ENCODE measurements at regions of chr1 and their contacts with region 1.

Region 1: DNA sequence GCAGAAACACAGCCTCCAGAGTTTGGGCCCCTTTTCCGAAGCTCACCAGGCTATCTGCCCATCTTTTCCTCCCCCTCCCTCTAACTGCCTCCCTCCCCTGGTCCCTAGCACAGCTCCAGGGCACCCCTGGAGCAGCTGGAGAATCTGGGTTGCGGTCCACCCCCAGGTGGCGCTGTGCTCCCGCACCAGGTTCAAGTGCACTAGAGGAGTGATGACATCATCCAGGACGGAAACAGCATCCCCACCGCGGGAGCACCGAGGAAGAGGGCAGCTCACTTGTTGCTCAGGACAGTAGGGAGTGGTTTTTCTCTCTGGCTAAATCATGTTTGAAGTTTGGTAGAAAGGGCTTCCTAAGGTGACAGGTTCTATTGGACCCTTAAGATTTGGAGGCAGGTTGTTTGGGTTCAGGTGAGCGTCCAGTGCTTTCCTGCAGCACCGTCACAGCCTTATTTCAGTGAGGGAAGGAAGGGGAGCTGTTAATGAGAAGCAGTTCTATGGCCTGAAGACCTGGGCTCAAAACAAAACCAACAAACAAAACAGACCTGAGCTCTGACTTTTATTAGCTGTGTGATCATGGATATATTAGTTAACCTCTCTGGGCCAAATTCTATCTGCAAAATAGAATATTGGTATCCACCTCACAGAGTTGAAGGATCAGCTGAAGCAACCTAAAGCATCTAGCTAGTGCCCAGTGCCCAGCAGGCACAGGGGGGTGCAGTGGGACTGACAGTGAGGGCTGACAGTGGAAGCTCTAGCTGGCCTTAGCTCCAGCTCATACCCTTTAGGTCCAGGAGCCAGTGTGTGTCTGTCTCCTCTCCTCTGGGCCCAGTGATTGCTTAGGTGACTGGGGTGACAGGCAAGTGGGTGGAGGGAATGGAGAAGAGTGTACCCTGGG is 7.5 kb downstream of the SHISA4 start:
- DNase-seq: peak; percentile 90
- H3K4me3 Mint-ChIP-seq: no peak overlapping the region
- H3K27ac Mint-ChIP-seq: peak overlapping the region; percentile 63
- H3K4me1 Mint-ChIP-seq: peaks cover 19% of the 10 kb centered on the region
- H3K27me3 Mint-ChIP-seq: peaks cover 15% of the 10 kb centered on the region

Region 2: GRCh38 chr1:201877877-201878401 is 18.2 kb before region 1 on chr1:
- CTCF ChIA-PET with region 1: interaction called, 12 read pairs
- POLR2A ChIA-PET with region 1: interaction called, 15 read pairs
- DNase-seq: no peak
- H3K4me3 Mint-ChIP-seq: no peak overlapping the region
- H3K27ac Mint-ChIP-seq: no peak overlapping the region
- H3K4me1 Mint-ChIP-seq: peaks cover 2% of the 10 kb centered on the region
- H3K27me3 Mint-ChIP-seq: no peaks in the 10 kb centered on the region

Region 3: DNA sequence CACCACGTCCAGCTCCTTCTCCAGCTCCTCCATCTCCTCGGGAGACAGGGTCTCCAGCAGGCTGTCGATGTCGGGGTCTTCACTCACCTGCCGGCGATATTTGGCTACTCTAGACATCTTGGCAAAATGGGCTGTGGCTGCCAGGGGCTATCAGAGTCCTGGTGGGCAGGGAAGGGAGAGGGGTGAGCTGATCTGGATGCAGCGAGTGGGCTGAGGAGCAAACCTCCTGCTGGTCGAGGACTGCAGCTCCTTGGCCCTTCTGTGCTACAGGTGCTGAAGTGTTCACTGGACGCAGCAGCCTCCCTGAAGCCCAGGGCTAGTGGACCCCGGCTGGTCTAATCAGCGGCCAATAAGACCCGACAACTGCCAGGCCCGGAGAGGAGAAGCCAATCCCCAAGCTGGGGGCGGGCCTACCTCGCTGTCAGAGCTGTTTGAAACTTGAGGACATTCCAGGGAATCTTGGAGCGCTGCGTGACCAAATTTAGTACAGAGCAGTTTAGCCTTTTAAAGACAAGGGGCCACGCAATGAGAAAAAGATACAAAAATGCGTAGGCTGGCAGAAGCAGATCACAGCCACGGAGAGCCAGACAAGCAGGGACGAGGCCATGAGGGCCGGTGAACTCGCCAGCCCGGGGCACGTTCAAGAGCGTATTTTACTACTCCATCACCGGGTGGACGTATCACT is 50.2 kb after region 1 on chr1 and contains the start of gene LMOD1:
- CTCF ChIA-PET with region 1: interaction called, 10 read pairs
- POLR2A ChIA-PET with region 1: no interaction called
- DNase-seq: no peak
- H3K4me3 Mint-ChIP-seq: no peak within 1 kb of the TSS
- H3K27ac Mint-ChIP-seq: no peak within 1 kb of the TSS
- H3K4me1 Mint-ChIP-seq: peaks cover 7% of the 10 kb centered on the region
- H3K27me3 Mint-ChIP-seq: peaks cover 61% of the 10 kb centered on the region
- total RNA-seq, gene LMOD1: not detected

Region 4: GRCh38 chr1:201970334-201971159 is 74.4 kb after region 1 on chr1:
- CTCF ChIA-PET with region 1: interaction called, 116 read pairs
- POLR2A ChIA-PET with region 1: interaction called, 20 read pairs
- DNase-seq: no peak
- H3K4me3 Mint-ChIP-seq: no peak overlapping the region
- H3K27ac Mint-ChIP-seq: no peak overlapping the region
- H3K4me1 Mint-ChIP-seq: peaks cover 1% of the 10 kb centered on the region
- H3K27me3 Mint-ChIP-seq: peaks cover 8% of the 10 kb centered on the region

Region 5: GRCh38 chr1:201999625-202000238 is 103.6 kb after region 1 on chr1:
- CTCF ChIA-PET with region 1: interaction called, 22 read pairs
- POLR2A ChIA-PET with region 1: interaction called, 3 read pairs
- DNase-seq: peak; percentile 31
- H3K4me3 Mint-ChIP-seq: no peak overlapping the region
- H3K27ac Mint-ChIP-seq: no peak overlapping the region
- H3K4me1 Mint-ChIP-seq: no peaks in the 10 kb centered on the region
- H3K27me3 Mint-ChIP-seq: no peaks in the 10 kb centered on the region